ENCODE measurements at regions of chr17 and their contacts with region 1.

Region 1: GRCh38 chr17:58249270-58250133 is 11.1 kb downstream of the LPO start:
- DNase-seq: peak; percentile 55
- H3K4me3 ChIP-seq: peak overlapping the region in 2 of 3 experiments; percentile 31 to 46
- H3K27ac ChIP-seq: no peak overlapping the region
- H3K4me1 ChIP-seq: no peaks in the 10 kb centered on the region
- H3K27me3 ChIP-seq: peaks cover 24% of the 10 kb centered on the region in 2 experiments
- CTCF ChIP-seq: peak; percentile 92 to 99
- POLR2A ChIP-seq: no peak

Region 2: GRCh38 chr17:58219001-58219788 is 30.3 kb before region 1 on chr17 and contains the start of gene MKS1:
- CTCF ChIA-PET with region 1: interaction called, 14 read pairs
- POLR2A ChIA-PET with region 1: no interaction called
- dilution Hi-C with region 1: no loop called
- intact Hi-C with region 1: loop called (anchors 1 kb)
- DNase-seq: peak; percentile 94
- H3K4me3 ChIP-seq: peak within 1 kb of the TSS; percentile 35 to 74 (median 66)
- H3K27ac ChIP-seq: peak within 1 kb of the TSS; percentile 48
- H3K4me1 ChIP-seq: peaks cover 16% of the 10 kb centered on the region
- H3K27me3 ChIP-seq: no peaks in the 10 kb centered on the region
- CTCF ChIP-seq: peak; percentile 45 to 75
- POLR2A ChIP-seq: peak; percentile 87
- total RNA-seq, gene MKS1: 12.2 and 16.3 TPM in 2 replicates

Region 3: GRCh38 chr17:58238139-58238634 is 11.3 kb before region 1 on chr17 and contains the start of gene LPO:
- CTCF ChIA-PET with region 1: interaction called, 30 read pairs
- POLR2A ChIA-PET with region 1: no interaction called
- dilution Hi-C with region 1: no loop called
- intact Hi-C with region 1: no loop called
- DNase-seq: no peak
- H3K4me3 ChIP-seq: no peak within 1 kb of the TSS
- H3K27ac ChIP-seq: no peak within 1 kb of the TSS
- H3K4me1 ChIP-seq: no peaks in the 10 kb centered on the region
- H3K27me3 ChIP-seq: peaks cover 12 to 29% of the 10 kb centered on the region in 2 experiments
- CTCF ChIP-seq: no peak
- POLR2A ChIP-seq: no peak
- total RNA-seq, gene LPO: not detected in 2 replicates

Region 4: DNA sequence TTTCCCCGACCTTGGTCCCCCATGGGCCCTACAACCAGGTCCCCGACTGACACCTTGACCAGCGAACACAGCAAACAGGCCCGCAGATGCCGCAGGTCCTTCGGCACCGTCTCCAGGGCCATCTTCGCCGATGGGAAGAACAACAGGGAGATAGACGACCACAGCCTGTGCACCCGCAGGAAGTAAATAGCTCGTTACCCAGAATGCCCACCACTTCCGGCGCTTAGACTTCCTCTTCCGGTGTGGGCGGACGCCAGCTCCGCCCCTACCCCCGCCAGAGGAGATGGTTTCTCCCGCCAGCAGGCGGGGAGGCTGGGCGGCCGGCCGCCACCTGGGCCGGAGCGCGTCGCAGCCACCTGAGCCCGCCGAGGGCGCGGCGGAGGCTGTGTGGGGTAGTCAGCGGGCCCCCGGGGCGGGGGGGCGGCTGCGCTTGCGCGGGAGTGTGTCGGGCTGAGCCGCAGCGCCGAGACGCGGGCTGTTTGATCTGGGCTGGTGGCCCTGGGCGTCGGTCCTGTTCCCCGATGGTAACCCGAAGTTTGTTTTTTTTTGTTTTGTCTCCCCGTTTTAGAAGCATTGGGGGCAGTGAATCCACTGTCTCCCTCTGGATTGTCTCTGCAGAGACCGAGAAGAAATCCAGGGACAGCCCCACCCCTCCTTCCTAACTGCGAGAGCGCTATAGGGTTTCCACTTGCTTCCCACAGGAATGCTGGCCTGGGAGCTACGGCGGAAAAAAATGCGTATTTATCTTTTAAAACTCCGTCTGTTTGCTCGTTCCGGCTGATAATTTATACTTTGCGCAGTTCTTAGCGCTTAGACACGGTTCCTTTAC is 102.7 kb after region 1 on chr17 and contains the start of gene SUPT4H1:
- CTCF ChIA-PET with region 1: interaction called, 11 read pairs
- POLR2A ChIA-PET with region 1: no interaction called
- dilution Hi-C with region 1: no loop called
- intact Hi-C with region 1: no loop called
- DNase-seq: peak; percentile 89
- H3K4me3 ChIP-seq: peak within 1 kb of the TSS; percentile 71 to 87 (median 86)
- H3K27ac ChIP-seq: peak within 1 kb of the TSS; percentile 49
- H3K4me1 ChIP-seq: peaks cover 4% of the 10 kb centered on the region
- H3K27me3 ChIP-seq: no peaks in the 10 kb centered on the region
- CTCF ChIP-seq: no peak
- POLR2A ChIP-seq: peak; percentile 97
- total RNA-seq, gene SUPT4H1: 70.9 and 77.5 TPM in 2 replicates

Measured in endothelial cell of umbilical vein (primary cell).